ENCODE measurements at regions of chr1 and their contacts with region 1.

Region 1: DNA sequence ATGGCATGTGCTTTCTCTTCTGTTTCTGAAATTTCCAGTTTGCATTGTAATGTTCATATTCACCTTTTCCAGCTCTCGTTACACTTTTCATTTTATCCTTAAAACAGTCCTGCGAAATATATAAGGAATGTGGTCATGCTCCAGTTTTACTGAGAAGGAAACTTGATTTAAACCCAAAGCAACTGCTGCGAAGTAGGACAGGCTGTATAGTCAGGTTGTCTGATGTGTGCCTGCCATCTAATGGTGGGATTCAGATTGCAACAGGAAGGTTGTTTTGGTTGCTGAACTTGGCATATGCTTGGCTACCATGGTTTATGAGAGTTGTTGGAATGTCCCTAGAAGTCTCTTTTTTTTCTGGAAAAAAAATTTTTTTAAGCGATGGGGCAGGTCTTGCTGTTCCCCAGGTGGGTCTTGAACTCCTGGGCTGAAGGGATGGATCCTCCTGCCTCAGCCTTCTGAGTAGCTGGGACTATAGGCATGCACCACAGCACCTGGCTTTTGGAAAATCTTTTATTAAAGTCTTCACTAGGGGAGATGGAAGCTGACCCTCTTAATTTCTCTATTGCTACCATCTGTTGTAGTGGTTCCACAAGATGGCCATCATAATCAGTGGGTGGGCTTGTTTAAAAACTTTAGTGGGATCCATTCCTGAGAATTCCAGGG is 86.9 kb downstream of the UCK2 start:
- DNase-seq: peak; percentile 44 to 66
- ATAC-seq: peak; percentile 43

Region 2: DNA sequence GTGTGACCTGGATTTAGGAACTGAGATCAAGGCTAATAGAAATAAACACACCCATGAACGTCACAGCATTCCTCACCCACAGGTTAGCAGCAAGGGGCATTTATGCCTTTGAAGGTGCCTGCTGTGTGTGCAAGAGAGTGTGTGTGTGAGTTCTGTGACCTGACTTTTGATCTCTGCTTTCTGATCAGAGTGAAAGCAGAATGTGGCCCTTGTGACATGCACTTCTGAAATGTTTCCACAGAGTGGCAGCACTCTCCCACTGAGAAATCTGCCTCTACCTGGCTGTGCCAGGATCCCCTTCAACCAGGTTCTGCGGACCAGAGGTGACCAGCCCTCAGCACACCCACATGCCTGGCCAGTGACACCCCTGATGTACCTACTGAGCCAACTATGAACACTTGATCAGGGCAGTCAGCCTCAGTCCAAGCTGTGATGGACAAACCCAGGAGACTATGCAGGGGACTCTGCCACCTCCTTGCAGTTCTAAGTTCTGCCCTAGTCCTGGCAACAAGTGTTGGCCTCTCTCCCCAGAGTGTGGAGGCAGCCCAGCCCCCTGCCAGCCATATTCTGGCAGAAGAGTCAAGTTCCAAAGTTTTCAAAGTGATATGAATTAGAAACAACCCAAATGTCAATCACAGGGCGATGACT is 510.3 kb before region 1 on chr1:
- intact Hi-C with region 1: loop called in 1 of 2 experiments (anchors 10 kb)
- DNase-seq: no peak
- ATAC-seq: peak; percentile 58

Region 3: DNA sequence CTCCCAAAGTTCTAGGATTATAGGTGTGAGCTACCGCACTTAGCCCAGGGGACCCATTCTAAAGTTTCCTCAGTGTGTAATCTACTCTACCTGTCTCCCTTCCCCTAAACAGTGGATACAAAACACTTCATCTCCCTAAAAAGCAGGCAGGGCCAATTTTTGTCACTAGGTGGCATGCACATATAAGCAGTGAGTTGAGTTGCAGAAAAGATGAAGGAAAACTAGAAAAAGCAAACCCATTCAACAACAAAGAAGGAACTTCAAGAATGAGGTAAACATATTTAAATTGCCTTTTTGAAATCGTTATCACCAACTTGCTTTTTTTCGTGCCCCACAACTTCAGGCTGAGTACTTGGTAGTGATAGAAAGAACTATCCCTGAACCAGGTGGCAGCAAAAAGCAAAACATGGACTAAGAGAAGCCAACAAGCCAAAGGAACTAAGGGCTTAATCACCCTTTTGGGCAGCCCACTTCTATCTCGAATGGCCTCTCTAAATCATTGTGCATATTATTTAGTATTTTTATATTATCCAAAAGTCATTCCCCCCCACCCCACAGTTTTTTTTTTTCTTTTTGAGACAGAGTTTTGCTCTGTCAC is 196.2 kb before region 1 on chr1:
- intact Hi-C with region 1: loop called in 1 of 2 experiments (anchors 2 kb)
- DNase-seq: peak in 1 of 2 donors; percentile 59
- ATAC-seq: peak; percentile 81

Region 4: GRCh38 chr1:165960136-165960535 is 45.9 kb after region 1 on chr1:
- intact Hi-C with region 1: no loop called
- DNase-seq: no peak
- ATAC-seq: no peak

Region 5: DNA sequence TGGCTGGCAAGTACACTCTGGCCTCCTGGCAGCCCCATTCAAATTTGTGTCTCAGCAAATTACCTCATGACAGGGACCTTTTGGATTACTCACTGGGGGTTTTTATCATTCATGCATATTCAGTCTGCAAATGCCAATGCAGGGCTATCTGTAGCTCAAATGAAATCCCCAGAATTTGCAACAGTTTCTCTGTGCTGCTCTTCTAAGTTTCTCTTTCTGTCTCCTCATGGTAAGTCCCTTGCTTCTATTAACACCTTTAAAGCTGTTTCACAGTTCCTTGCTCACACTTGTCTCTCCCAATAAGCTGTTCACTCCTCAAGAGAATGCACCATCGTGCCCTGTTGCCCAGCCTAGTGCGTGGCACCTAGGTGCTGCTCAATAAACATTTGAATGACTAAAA is 255.8 kb after region 1 on chr1:
- intact Hi-C with region 1: no loop called
- DNase-seq: no peak
- ATAC-seq: no peak

Region 6: DNA sequence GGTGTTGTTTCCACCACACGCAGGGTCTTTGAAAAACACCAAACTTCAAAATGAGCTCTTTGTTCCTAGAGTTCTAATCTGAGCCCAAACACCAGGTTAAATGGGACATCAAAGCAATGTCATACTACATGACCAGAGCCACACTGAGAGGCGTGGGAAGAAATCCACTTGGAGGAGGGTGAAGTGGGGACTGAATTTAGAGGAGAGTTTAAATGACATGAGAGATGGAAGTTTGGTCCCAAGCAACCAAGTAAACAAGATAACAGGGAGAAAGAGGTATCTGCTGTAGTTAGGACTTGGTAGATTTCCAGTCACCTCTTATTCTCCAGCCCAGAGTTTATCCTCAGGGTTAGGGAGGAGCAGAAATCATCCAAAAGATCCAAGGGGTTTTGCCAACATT is 543.4 kb after region 1 on chr1:
- intact Hi-C with region 1: no loop called
- DNase-seq: no peak
- ATAC-seq: no peak

Measured in left colon (tissue), 2 donors.